ENCODE measurements at regions of chr17 and their contacts with region 1.

Region 1: DNA sequence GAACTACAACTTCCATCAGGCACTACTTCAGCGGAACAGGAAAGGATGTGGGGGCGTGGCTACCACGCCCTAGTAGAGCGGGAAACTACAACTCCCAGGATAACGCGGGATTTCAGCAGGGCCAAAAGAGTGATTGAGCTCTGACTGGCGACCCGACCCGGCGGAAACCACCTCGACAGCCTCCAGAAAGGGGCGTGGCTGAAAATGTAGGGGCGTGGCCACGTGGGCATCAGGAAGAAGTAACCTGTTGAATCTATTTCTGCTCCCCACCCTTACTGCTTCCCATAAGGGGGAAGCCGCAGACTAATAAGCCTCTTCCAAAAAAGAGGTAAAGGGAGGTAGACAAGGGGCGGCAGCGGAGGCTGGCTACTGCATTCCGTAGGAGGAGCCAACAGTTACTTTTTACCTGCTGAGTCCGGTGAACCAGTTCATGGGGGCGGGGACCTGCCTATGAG is at the start of gene TMEM102:
- DNase-seq: peak; percentile 99
- H3K4me3 Mint-ChIP-seq: peak within 1 kb of the TSS; percentile 91
- H3K27ac Mint-ChIP-seq: peak within 1 kb of the TSS; percentile 95
- H3K4me1 Mint-ChIP-seq: peaks cover 36% of the 10 kb centered on the region
- H3K27me3 Mint-ChIP-seq: peaks cover 15% of the 10 kb centered on the region
- total RNA-seq, gene TMEM102: 11.4 to 11.6 TPM

Region 2: GRCh38 chr17:7280519-7281429 is 154.5 kb before region 1 on chr17:
- CTCF ChIA-PET with region 1: interaction called, 10 read pairs
- POLR2A ChIA-PET with region 1: no interaction called
- intact Hi-C with region 1: loop called (anchors 1 kb)
- DNase-seq: peak; percentile 91
- H3K4me3 Mint-ChIP-seq: peak overlapping the region; percentile 65
- H3K27ac Mint-ChIP-seq: no peak overlapping the region
- H3K4me1 Mint-ChIP-seq: peaks cover 12% of the 10 kb centered on the region
- H3K27me3 Mint-ChIP-seq: peaks cover 16% of the 10 kb centered on the region

Region 3: GRCh38 chr17:7394452-7395191 is 40.6 kb before region 1 on chr17 and contains the start of gene PLSCR3:
- CTCF ChIA-PET with region 1: interaction called, 9 read pairs
- POLR2A ChIA-PET with region 1: no interaction called
- intact Hi-C with region 1: loop called (anchors 1 kb)
- DNase-seq: peak; percentile 86
- H3K4me3 Mint-ChIP-seq: peak within 1 kb of the TSS; percentile 95
- H3K27ac Mint-ChIP-seq: peak within 1 kb of the TSS; percentile 88
- H3K4me1 Mint-ChIP-seq: peaks cover 27% of the 10 kb centered on the region
- H3K27me3 Mint-ChIP-seq: no peaks in the 10 kb centered on the region
- total RNA-seq, gene PLSCR3: 78.2 to 87.0 TPM

Region 4: DNA sequence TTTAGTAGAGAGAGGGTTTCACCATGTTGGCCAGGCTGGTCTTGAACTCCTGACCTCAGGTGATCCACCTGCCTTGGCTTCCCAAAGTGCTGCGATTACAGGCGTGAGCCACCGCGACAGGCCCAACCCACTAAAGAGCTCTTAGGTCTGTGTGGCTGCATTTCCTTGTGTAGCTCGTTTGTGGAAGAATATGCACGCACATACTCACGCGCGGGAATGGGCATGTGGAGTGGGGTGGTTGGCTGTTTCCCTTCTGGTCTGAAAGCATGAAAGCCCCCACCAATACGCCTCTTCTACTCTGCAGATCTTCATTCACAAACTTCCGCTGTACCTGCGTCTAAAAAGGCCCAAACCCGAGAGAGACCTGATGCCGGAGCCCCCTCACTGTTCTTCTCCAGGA is 19.7 kb after region 1 on chr17:
- CTCF ChIA-PET with region 1: interaction called, 53 read pairs
- POLR2A ChIA-PET with region 1: interaction called, 14 read pairs
- intact Hi-C with region 1: loop called (anchors 1 kb)
- DNase-seq: no peak
- H3K4me3 Mint-ChIP-seq: peak overlapping the region; percentile 93
- H3K27ac Mint-ChIP-seq: peak overlapping the region; percentile 96
- H3K4me1 Mint-ChIP-seq: peaks cover 13% of the 10 kb centered on the region
- H3K27me3 Mint-ChIP-seq: no peaks in the 10 kb centered on the region

Measured in activated CD4-positive, alpha-beta memory T cell treated with anti-CD3 and anti-CD28 coated beads for 36 hours (primary cell).